PC-3 (cell line): ENCODE measurements at regions of chr4 and their contacts with region 1.

Region 1: DNA sequence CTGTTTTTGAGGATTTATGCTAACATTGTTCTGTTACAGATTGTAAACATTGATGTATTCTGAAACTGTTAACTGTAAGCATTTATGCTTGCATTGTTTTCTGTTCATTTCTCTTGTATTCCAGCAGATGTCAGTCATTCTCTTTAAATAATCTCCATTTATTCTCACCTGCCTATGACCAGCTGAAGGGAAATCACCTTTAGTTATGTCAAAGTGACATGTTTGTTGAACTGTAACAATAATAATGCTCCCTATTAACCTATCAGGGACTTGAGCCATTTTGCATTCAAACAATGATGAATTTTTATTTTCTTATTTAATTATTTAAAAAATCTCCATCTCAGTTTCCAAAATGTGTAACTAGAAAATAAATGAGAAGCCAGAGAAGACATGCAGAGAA is 58.0 kb downstream of the SPCS3 start:
- DNase-seq: peak; percentile 59
- ATAC-seq: peak; percentile 63
- H3K4me3 ChIP-seq: no peak overlapping the region
- H3K27ac ChIP-seq: peak overlapping the region; percentile 56
- H3K4me1 ChIP-seq: peaks cover 13% of the 10 kb centered on the region; the same call in 1 of the 2 replicates
- H3K27me3 ChIP-seq: no peaks in the 10 kb centered on the region
- CTCF ChIP-seq: peak; percentile 71

Region 2: GRCh38 chr4:176499518-176499917 is 121.7 kb after region 1 on chr4:
- CTCF ChIA-PET with region 1: no interaction called
- POLR2A ChIA-PET with region 1: interaction called, 3 read pairs
- intact Hi-C with region 1: loop called (anchors 2 kb)
- DNase-seq: peak; percentile 92
- ATAC-seq: peak; percentile 81
- H3K4me3 ChIP-seq: peak overlapping the region; percentile 48
- H3K27ac ChIP-seq: peak overlapping the region; percentile 91
- H3K4me1 ChIP-seq: peaks cover 14% of the 10 kb centered on the region
- H3K27me3 ChIP-seq: no peaks in the 10 kb centered on the region
- CTCF ChIP-seq: no peak

Region 3: GRCh38 chr4:176563591-176563990 is 185.8 kb after region 1 on chr4:
- CTCF ChIA-PET with region 1: no interaction called
- POLR2A ChIA-PET with region 1: no interaction called
- intact Hi-C with region 1: loop called (anchors 1 kb)
- DNase-seq: peak; percentile 54
- ATAC-seq: peak; percentile 53
- H3K4me3 ChIP-seq: no peak overlapping the region
- H3K27ac ChIP-seq: no peak overlapping the region
- H3K4me1 ChIP-seq: peaks cover 14% of the 10 kb centered on the region
- H3K27me3 ChIP-seq: no peaks in the 10 kb centered on the region
- CTCF ChIP-seq: peak; percentile 46

Region 4: GRCh38 chr4:176660561-176660960 is 282.8 kb after region 1 on chr4:
- CTCF ChIA-PET with region 1: no interaction called
- POLR2A ChIA-PET with region 1: no interaction called
- intact Hi-C with region 1: loop called (anchors 5 kb)
- DNase-seq: peak; percentile 46
- ATAC-seq: peak; percentile 62
- H3K4me3 ChIP-seq: no peak overlapping the region
- H3K27ac ChIP-seq: no peak overlapping the region
- H3K4me1 ChIP-seq: no peaks in the 10 kb centered on the region
- H3K27me3 ChIP-seq: no peaks in the 10 kb centered on the region
- CTCF ChIP-seq: peak; percentile 47

Region 5: DNA sequence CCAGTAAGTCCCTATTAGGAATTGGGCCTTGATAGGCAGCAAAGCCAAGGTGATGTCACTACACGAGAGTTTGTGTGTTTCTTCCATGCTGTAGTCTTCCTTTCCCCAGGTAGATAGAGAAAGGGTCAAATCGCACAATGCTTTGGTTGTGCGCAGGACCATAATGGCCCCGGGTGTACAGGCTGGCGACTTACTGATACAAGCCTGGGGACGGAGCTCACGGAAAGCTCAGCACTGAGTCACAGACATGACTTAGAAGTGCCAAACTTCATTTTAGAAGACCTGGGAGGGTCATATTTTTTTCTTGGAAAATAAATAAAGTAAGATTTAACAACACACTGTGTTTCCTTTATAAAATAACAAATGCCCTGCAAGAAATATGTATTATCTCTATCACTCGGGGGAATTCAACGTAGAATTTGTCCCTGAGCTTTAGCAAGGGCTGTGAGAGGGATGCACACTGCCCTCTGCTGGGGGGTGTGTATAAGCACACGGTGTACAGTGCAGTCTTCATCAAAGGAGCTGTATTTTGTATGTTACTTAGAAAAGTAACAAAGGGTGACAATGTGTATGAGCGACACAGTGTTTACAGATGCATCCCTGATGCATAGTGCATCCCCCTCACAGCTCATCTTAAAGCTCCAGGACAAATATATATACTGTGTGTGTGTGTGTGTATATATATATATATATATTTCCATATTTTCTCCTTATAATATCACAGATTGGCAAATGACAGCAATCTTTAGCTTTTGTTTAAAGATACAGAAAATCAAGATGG is 669.5 kb after region 1 on chr4:
- CTCF ChIA-PET with region 1: interaction called, 3 read pairs
- POLR2A ChIA-PET with region 1: no interaction called
- intact Hi-C with region 1: loop called (anchors 1 kb)
- DNase-seq: peak; percentile 78
- ATAC-seq: peak; percentile 96
- H3K4me3 ChIP-seq: no peak overlapping the region
- H3K27ac ChIP-seq: peak overlapping the region; percentile 76
- H3K4me1 ChIP-seq: peaks cover 13% of the 10 kb centered on the region
- H3K27me3 ChIP-seq: no peaks in the 10 kb centered on the region
- CTCF ChIP-seq: peak; percentile 84

Region 6: DNA sequence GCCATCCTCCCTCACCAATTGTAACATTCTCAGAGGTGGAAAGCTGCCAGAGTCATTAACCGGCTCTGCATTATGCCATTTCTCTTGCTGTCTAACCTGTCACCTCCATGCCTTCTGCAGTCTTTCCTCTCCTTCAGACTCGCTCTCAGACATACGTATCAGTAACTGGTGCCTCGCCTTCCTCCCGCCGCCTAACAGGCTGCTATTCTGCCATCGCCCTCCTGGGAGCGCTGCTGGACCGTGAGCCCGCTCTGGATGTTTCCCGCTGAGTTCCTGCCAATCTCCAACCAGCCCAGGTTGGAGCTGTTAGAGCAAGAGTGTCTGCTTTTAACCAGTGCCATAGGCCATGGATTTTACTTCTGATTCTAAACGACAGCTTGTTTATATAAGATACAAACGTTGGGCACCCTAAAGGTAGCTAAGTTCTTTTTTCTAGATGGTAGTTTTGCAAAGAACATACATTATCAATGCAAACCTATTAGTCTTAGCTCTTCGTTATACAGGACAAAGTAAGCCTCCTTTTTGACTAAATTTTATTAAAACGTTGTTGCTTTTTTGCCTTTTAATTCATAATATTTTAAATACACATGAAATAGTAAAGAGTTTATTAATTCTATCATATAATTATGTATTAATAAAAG is 872.4 kb after region 1 on chr4:
- CTCF ChIA-PET with region 1: no interaction called
- POLR2A ChIA-PET with region 1: no interaction called
- intact Hi-C with region 1: loop called (anchors 1 kb)
- DNase-seq: peak; percentile 69
- ATAC-seq: peak; percentile 88
- H3K4me3 ChIP-seq: no peak overlapping the region
- H3K27ac ChIP-seq: no peak overlapping the region
- H3K4me1 ChIP-seq: peaks cover 16% of the 10 kb centered on the region; the same call in 1 of the 2 replicates
- H3K27me3 ChIP-seq: no peaks in the 10 kb centered on the region
- CTCF ChIP-seq: peak; percentile 90

Region 7: DNA sequence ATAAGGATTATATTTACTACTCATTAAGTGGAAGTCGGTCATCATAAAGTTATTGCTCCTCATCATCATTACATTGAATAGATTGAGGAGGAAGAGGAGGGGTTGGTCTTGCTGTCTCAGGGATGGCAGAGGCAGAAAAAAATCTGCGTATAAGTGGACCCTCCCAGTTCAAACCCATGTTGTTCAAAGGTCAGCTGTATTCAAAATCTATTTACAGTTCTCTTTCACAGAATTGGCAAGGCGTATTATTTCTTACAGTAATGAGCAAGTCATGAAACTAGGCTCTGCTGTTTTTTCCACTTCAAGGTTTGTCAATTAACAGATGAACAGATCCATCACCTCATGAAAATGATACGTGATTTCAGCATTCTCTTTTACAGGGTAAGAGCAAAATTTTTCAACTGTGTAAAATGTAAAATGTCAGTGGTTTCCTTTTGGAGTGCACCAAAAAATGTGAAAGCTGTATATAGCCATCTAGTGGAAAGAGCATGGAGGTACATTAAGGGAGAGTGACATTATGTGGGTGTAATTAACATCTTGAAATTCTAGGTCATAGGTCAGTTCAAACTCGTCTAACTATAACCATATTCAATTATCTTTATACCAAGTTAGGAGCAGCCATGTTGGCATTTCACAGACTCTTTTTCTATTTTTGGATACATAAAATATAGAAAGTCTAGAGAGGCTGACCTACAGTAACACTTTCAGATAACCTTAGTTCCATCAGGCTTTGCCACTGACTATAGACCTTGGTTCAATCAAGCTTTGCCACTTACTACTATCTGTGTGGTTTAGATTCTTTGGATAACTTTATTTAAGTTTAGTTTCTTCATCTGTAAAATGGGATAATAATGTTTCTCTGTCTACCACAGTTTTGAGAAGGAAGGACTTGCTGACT is 961.9 kb after region 1 on chr4:
- CTCF ChIA-PET with region 1: no interaction called
- POLR2A ChIA-PET with region 1: no interaction called
- intact Hi-C with region 1: loop called (anchors 2 kb)
- DNase-seq: peak; percentile 31
- ATAC-seq: peak; percentile 48; the same call in 1 of the 2 replicates
- H3K4me3 ChIP-seq: no peak overlapping the region
- H3K27ac ChIP-seq: no peak overlapping the region
- H3K4me1 ChIP-seq: no peaks in the 10 kb centered on the region
- H3K27me3 ChIP-seq: no peaks in the 10 kb centered on the region
- CTCF ChIP-seq: peak; percentile 66